ENCODE measurements at regions of chr21 and their contacts with region 1.

Region 1: GRCh38 chr21:36966066-36966820 is at the start of gene HLCS:
- DNase-seq: peak; percentile 64 to 89
- ATAC-seq: peak; percentile 85 to 91 (median 86)
- H3K4me3 ChIP-seq: peak within 1 kb of the TSS; percentile 58
- H3K4me3 Mint-ChIP-seq: peak within 1 kb of the TSS; percentile 93
- H3K27ac ChIP-seq: peak within 1 kb of the TSS; percentile 81
- H3K27ac Mint-ChIP-seq: peak within 1 kb of the TSS; percentile 87 to 89
- H3K4me1 ChIP-seq: peaks cover 12% of the 10 kb centered on the region
- H3K4me1 Mint-ChIP-seq: peaks cover 9 to 13% of the 10 kb centered on the region in 2 donors
- H3K27me3 ChIP-seq: no peaks in the 10 kb centered on the region
- H3K27me3 Mint-ChIP-seq: no peaks in the 10 kb centered on the region
- CTCF ChIP-seq: peak; percentile 24
- total RNA-seq, gene HLCS: 28.4 to 36.0 (median 33.0) TPM

Region 2: GRCh38 chr21:36989699-36990507 is 23.7 kb after region 1 on chr21:
- intact Hi-C with region 1: loop called (anchors 2 kb)
- DNase-seq: peak; percentile 86 to 93
- ATAC-seq: peak; percentile 89 to 94 (median 90)
- H3K4me3 ChIP-seq: peak overlapping the region; percentile 54
- H3K4me3 Mint-ChIP-seq: peak overlapping the region; percentile 88
- H3K27ac ChIP-seq: peak overlapping the region; percentile 77
- H3K27ac Mint-ChIP-seq: peak overlapping the region; percentile 87 to 94
- H3K4me1 ChIP-seq: peaks cover 18% of the 10 kb centered on the region
- H3K4me1 Mint-ChIP-seq: peaks cover 10 to 11% of the 10 kb centered on the region in 2 donors
- H3K27me3 ChIP-seq: no peaks in the 10 kb centered on the region
- H3K27me3 Mint-ChIP-seq: no peaks in the 10 kb centered on the region
- CTCF ChIP-seq: peak; percentile 96

Region 3: GRCh38 chr21:37118187-37118826 is 152.1 kb after region 1 on chr21:
- intact Hi-C with region 1: no loop called
- DNase-seq: no peak
- ATAC-seq: no peak
- H3K4me3 ChIP-seq: no peak overlapping the region
- H3K4me3 Mint-ChIP-seq: no peak overlapping the region
- H3K27ac ChIP-seq: no peak overlapping the region
- H3K27ac Mint-ChIP-seq: no peak overlapping the region
- H3K4me1 ChIP-seq: no peaks in the 10 kb centered on the region
- H3K4me1 Mint-ChIP-seq: peaks cover 10 to 12% of the 10 kb centered on the region in 2 donors
- H3K27me3 ChIP-seq: no peaks in the 10 kb centered on the region
- H3K27me3 Mint-ChIP-seq: no peaks in the 10 kb centered on the region
- CTCF ChIP-seq: no peak